Activated naive CD4-positive, alpha-beta T cell treated with anti-CD3 and anti-CD28 coated beads, Interleukin-2, amount 10 ng/mL, durations not matched to agents 7 days and 5 days (primary cell): ENCODE measurements at regions of chr14 and their contacts with region 1.

Region 1: DNA sequence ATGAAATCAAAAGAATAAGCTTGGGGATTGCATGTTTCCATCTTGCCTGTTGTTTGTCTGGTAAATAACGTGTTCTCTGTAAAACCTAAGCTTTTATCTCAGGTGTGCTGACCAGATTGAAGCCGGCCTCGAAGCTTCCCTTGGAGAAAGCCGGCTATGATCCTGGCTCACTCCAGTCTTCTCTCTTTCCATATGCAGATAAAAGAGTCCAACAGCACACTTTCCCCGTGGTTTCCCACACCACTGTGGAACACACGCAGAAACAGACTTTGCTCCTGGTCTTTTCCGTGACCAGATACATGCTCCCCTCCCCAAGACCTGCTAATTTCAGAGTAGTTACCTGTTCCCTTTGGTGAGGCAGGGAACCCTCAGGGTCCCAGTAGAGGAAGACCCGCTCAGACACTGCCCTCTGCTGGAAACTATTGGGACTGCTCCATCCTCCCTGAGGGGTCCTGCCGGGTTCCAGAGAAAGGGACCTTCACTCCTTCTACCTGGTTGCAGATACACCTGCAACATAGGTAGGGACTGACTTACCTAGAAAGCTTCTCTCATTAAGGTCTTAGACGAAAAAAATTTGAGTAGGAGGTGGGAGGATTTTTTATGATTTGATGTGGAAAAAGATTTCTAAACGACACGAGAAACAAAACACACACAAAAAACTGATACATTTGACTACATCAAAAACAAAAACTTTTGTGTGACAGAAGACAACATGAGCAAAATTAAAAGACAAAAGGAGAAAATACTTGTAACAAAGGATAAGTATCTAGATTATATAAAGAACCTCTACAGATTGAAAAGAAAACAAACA is 415.5 kb upstream of the CCDC196 start:
- DNase-seq: peak; percentile 81
- H3K4me3 Mint-ChIP-seq: no peak overlapping the region
- H3K27ac Mint-ChIP-seq: no peak overlapping the region
- H3K4me1 Mint-ChIP-seq: peaks cover 16% of the 10 kb centered on the region
- H3K27me3 Mint-ChIP-seq: peaks cover 17% of the 10 kb centered on the region

Region 2: DNA sequence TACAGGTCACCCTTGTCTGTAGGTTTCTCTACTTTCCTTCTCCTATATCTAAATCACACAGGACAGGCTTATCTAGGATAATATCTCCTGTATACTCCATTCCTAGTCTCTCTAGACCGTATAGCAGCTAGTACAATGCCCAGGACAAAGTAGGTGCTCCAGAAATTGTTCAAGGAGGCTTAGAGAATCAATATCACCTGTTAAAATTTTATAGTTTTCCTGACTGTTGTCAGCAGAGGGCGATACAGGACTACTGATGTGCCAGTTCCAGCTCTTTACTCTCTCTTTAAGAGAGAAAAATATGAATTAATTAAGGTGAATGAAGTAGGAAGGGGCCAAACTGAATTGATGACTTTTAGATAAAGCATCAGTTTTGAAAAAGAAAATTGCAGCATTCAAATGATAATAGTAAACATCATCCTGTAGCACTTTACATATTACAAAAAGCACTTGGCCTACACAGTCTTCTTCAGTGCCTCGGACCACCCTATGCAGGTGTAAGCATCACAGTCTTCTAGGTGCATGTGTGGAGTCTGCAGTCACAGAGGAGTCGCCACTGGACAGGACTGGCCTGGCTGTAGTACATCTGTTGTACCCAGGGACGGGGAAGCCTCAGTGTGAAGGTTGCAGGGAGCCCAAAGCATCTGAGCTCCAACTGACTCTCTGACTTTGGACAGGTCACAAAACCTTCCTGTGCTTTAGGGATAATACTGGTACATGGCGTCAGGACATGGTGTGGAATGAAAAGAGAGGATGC is 906.5 kb before region 1 on chr14:
- CTCF ChIA-PET with region 1: interaction called, 32 read pairs
- DNase-seq: peak; percentile 56
- H3K4me3 Mint-ChIP-seq: no peak overlapping the region
- H3K27ac Mint-ChIP-seq: no peak overlapping the region
- H3K4me1 Mint-ChIP-seq: peaks cover 15% of the 10 kb centered on the region
- H3K27me3 Mint-ChIP-seq: peaks cover 6% of the 10 kb centered on the region

Region 3: GRCh38 chr14:66038618-66039017 is 32.1 kb before region 1 on chr14:
- CTCF ChIA-PET with region 1: no interaction called
- DNase-seq: no peak
- H3K4me3 Mint-ChIP-seq: no peak overlapping the region
- H3K27ac Mint-ChIP-seq: no peak overlapping the region
- H3K4me1 Mint-ChIP-seq: no peaks in the 10 kb centered on the region
- H3K27me3 Mint-ChIP-seq: peaks cover 24% of the 10 kb centered on the region

Region 4: GRCh38 chr14:66056926-66057552 is 13.7 kb before region 1 on chr14:
- CTCF ChIA-PET with region 1: interaction called, 10 read pairs
- DNase-seq: no peak
- H3K4me3 Mint-ChIP-seq: no peak overlapping the region
- H3K27ac Mint-ChIP-seq: no peak overlapping the region
- H3K4me1 Mint-ChIP-seq: no peaks in the 10 kb centered on the region
- H3K27me3 Mint-ChIP-seq: peaks cover 10% of the 10 kb centered on the region

Region 5: DNA sequence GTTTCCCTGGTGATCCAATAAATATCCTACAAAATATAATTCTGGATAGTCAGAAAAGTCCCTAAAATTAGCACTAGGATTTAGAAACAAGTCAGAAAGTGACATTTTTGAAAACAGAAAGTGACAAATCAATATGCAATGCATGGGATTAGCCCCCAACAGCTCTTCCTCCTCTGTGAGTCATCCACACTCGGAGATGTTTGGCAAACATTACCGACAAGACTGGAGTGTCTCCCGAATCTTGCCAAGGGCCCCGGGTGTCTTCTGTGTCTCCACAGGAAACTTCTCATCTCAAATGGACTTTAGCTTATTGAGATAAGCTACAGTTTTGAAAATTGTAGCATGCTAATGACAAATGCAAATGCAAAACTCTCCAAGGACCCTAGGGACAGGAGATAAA is 16.5 kb after region 1 on chr14:
- CTCF ChIA-PET with region 1: no interaction called
- DNase-seq: no peak
- H3K4me3 Mint-ChIP-seq: no peak overlapping the region
- H3K27ac Mint-ChIP-seq: no peak overlapping the region
- H3K4me1 Mint-ChIP-seq: no peaks in the 10 kb centered on the region
- H3K27me3 Mint-ChIP-seq: peaks cover 18% of the 10 kb centered on the region